Lower leg skin (tissue), 4 donors: ENCODE measurements at regions of chrX and their contacts with region 1.

Region 1: DNA sequence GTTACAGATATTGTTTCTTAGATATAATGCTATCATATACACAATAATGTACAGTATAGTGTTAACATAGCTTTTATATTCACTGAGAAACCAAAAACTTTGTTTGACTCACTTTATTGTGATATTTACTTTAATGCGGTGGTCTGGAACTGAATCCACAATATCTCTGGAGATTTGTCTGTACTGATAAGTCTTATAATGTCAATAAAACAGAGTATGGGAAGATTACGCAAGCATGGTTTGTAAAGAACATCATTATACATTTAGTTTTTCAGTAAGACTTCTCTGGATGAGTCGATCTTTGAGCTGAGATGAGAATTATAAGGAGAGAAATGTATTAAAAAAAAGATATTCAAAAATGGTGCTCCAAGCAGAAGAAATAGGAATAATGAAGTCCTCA is 43.0 kb downstream of the ACTRT1 start:
- DNase-seq: no peak
- H3K4me3 ChIP-seq: no peak overlapping the region
- CTCF ChIP-seq: no peak
- POLR2A ChIP-seq: no peak

Region 2: DNA sequence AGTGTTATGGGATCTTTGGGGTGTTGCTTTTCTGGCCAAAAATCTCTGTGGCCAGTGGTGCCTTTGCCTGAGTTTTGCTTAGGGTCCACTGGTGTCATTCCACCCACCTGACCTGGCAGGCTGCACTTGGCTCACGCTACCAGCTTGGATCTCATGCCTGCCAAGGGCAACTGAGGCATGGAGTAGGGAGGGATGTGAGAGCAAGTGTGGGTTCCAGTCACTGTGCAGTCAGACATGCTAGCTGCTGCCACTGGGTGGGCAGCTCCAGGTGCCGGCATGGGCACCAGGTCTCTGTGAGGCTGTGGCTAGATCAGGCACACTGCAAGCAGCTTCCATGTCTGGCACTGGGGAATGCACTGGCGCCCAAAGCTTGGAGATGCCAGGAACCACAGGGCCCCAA is 765.6 kb before region 1 on chrX:
- intact Hi-C with region 1: no loop called
- DNase-seq: no peak
- H3K4me3 ChIP-seq: no peak overlapping the region
- CTCF ChIP-seq: no peak
- POLR2A ChIP-seq: no peak

Region 3: DNA sequence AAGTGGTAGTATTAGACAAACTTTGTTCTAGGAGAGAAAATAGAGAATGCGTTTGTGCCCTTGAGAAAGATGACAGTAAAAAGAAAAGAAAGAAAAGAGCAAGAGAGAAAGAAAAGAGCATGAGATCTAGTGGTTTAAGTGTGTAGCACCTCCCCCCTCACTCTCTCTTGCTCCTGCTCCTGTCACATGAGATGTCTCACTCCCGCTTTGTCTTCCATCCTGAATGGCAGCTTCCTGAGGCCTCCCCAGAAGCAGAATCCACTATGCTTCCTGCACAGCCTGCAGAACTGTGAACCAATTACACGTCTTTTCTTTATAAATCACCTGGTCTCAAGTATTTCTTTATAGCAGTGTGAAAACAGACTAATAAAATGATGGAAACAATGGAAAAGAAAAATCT is 456.6 kb before region 1 on chrX:
- intact Hi-C with region 1: loop called (anchors 5 kb)
- DNase-seq: no peak
- H3K4me3 ChIP-seq: no peak overlapping the region
- CTCF ChIP-seq: no peak
- POLR2A ChIP-seq: no peak